ENCODE measurements at regions of chr19 and their contacts with region 1.

Region 1: GRCh38 chr19:2887391-2887914 is 13.3 kb upstream of the ZNF57 start:
- DNase-seq: no peak
- ATAC-seq: peak; percentile 66
- H3K4me3 Mint-ChIP-seq: no peak overlapping the region
- H3K27ac Mint-ChIP-seq: peak overlapping the region; percentile 2
- H3K4me1 Mint-ChIP-seq: peaks cover 5% of the 10 kb centered on the region
- H3K27me3 Mint-ChIP-seq: no peaks in the 10 kb centered on the region

Region 2: DNA sequence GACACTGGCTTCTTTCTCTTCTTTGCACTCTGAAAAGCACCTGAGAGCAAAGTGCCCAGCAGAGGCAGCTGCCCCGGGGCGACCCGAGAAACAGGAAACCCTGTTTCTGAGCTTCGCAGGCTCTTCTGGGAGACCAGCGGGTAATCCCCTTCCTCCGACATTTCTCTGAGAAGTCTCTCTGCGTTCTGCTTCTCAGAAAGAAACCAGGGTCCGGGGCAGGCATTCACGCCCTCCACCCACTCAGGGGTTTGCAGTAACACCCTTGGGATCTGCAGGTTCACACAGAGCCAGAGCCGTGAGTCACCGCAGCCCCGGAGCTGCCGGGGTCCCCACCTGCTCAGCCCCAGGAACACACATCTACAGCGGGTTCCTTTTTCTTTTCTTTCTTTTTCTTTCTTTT is 325.6 kb before region 1 on chr19:
- CTCF ChIA-PET with region 1: no interaction called
- POLR2A ChIA-PET with region 1: no interaction called
- intact Hi-C with region 1: no loop called
- DNase-seq: peak; percentile 88
- ATAC-seq: peak; percentile 92
- H3K4me3 Mint-ChIP-seq: peak overlapping the region; percentile 69
- H3K27ac Mint-ChIP-seq: peak overlapping the region; percentile 85
- H3K4me1 Mint-ChIP-seq: peaks cover 23% of the 10 kb centered on the region
- H3K27me3 Mint-ChIP-seq: peaks cover 2% of the 10 kb centered on the region

Region 3: GRCh38 chr19:2900296-2901252 is 13.1 kb after region 1 on chr19 and contains the start of gene ZNF57:
- CTCF ChIA-PET with region 1: interaction called, 4 read pairs
- POLR2A ChIA-PET with region 1: no interaction called
- intact Hi-C with region 1: loop called in 1 of 2 experiments (anchors 1 kb)
- DNase-seq: peak; percentile 100
- ATAC-seq: peak; percentile 99
- H3K4me3 Mint-ChIP-seq: peak within 1 kb of the TSS; percentile 98
- H3K27ac Mint-ChIP-seq: peak within 1 kb of the TSS; percentile 96
- H3K4me1 Mint-ChIP-seq: peaks cover 18% of the 10 kb centered on the region
- H3K27me3 Mint-ChIP-seq: no peaks in the 10 kb centered on the region
- total RNA-seq, gene ZNF57: 5.9 to 7.1 TPM

Region 4: GRCh38 chr19:2944775-2945574 is 57.5 kb after region 1 on chr19 and contains the start of gene ZNF77:
- CTCF ChIA-PET with region 1: interaction called, 15 read pairs
- POLR2A ChIA-PET with region 1: no interaction called
- intact Hi-C with region 1: loop called in 1 of 2 experiments (anchors 2 kb)
- DNase-seq: peak; percentile 99
- ATAC-seq: peak; percentile 100
- H3K4me3 Mint-ChIP-seq: peak within 1 kb of the TSS; percentile 83
- H3K27ac Mint-ChIP-seq: peak within 1 kb of the TSS; percentile 97
- H3K4me1 Mint-ChIP-seq: peaks cover 34% of the 10 kb centered on the region
- H3K27me3 Mint-ChIP-seq: no peaks in the 10 kb centered on the region
- total RNA-seq, gene ZNF77: 4.3 to 4.8 TPM

Region 5: DNA sequence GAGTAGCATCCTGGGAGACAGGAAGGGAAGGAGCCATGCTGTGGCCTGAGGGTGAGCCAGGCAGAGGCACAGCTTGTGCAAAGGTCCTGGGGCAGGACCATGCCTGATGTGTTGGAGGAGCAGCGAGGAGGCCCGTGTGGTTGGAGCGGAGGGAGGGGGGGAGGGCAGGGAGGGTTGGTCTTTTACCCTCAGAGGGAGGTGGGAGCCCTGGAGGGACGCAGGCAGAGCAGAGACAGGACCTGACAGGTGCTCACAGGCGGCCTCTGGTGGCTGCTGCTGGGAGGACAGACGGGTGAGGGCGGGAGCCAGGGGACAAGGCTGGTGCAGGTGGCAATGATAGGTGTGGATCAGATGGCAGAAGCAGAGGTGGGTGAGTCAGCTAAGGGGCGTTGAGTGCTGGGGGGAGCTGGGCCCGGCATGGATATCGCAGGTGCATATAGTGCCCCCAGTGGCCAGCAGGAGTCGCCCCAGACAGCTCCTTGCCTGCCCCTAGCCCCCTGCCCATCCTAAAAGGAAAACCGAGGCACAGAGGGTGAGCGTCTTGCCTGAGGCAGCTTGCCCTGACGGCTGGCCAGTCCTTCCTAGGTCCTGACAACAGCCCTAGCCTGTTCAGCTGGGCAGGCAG is 238.6 kb after region 1 on chr19:
- CTCF ChIA-PET with region 1: no interaction called
- POLR2A ChIA-PET with region 1: no interaction called
- intact Hi-C with region 1: no loop called
- DNase-seq: peak; percentile 93
- ATAC-seq: peak; percentile 97
- H3K4me3 Mint-ChIP-seq: no peak overlapping the region
- H3K27ac Mint-ChIP-seq: no peak overlapping the region
- H3K4me1 Mint-ChIP-seq: peaks cover 4% of the 10 kb centered on the region
- H3K27me3 Mint-ChIP-seq: no peaks in the 10 kb centered on the region

Measured in activated CD4-positive, alpha-beta T cell treated with anti-CD3 and anti-CD28 coated beads for 36 hours (primary cell).